K562 (cell line): ENCODE measurements at regions of chr11 and their contacts with region 1.

Region 1: DNA sequence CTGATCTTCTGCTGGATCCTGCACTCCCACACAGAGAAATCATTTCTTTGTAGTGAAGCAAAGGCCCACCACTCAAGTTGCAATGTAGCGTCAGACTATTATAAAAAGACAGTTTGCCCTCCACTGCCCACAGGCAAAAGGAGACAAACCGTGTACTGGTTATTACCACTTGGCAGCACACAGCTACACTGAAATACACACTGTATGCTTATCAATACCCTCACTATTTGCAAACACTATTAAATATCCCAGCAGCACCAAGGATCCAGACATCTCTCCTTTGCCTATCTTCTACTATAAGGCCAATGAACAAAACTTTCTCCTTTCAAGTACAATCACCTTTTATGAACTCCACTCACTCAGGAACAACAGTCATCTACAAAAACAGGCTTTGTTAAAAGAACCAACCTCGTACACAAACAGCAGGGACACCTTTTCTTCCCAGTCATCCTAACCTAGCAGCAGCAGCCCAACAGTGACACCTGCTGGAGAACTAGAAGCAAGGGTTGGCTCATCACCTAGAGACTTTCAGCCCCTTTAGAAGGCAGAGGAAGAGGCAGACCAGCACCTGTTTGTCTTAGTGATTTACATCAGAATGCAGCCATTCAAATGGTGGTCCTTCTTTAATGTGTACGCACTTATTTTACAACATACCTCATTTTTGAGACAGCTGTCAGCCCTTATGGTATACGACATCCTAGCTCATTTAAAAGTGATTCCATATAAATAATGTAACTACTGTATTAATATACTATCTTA is 56.1 kb downstream of the AMBRA1 start:
- DNase-seq: peak; percentile 78 to 90 (median 82)
- ATAC-seq: peak; percentile 91
- H3K4me3 ChIP-seq: no peak overlapping the region
- H3K27ac ChIP-seq: peak overlapping the region; percentile 22; the same call in 1 of the 3 replicates
- H3K4me1 ChIP-seq: peaks cover 16 to 35% of the 10 kb centered on the region in 2 experiments
- H3K27me3 ChIP-seq: no peaks in the 10 kb centered on the region; a peak in 1 of 5 replicates
- CTCF ChIP-seq: peak; percentile 92 to 93 (median 93)
- EP300 ChIP-seq: no peak
- POLR2A ChIP-seq: no peak
- RAD21 ChIP-seq: peak; percentile 92

Region 2: GRCh38 chr11:46380340-46381047 is 157.2 kb before region 1 on chr11:
- CTCF ChIA-PET with region 1: interaction called, 10 read pairs
- POLR2A ChIA-PET with region 1: interaction called, 3 read pairs
- in situ Hi-C with region 1: no loop called
- intact Hi-C with region 1: no loop called
- DNase-seq: peak; percentile 86 to 90 (median 88)
- ATAC-seq: peak; percentile 62
- H3K4me3 ChIP-seq: peak overlapping the region; percentile 75
- H3K27ac ChIP-seq: peak overlapping the region; percentile 96
- H3K4me1 ChIP-seq: peaks cover 25 to 66% of the 10 kb centered on the region in 2 experiments
- H3K27me3 ChIP-seq: no peaks in the 10 kb centered on the region
- CTCF ChIP-seq: no peak
- EP300 ChIP-seq: no peak
- POLR2A ChIP-seq: peak; percentile 66
- RAD21 ChIP-seq: no peak

Region 3: DNA sequence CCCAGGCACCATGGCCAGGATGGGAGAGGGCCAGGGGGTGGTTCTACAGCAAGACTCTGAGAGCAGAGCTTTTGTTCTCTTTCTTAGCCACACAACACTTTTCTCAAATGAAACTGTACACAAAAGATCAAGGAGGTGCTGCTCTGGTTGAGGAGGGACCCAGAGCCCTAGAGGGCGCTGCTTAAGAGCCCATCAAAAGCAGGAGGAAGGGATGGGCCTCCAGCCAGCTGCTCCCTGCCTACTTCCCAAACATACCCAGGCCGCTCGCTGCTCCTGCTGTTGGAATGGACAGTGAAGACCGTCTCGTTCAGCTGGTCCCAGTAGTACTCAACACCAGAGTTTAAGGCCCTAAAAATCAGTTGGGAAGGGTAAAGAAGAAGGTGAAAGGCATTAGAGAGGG is 127.7 kb before region 1 on chr11:
- CTCF ChIA-PET with region 1: no interaction called
- POLR2A ChIA-PET with region 1: no interaction called
- in situ Hi-C with region 1: no loop called
- intact Hi-C with region 1: loop called (anchors 5 kb)
- DNase-seq: peak in 1 of 4 experiments; percentile 29
- ATAC-seq: peak; percentile 77
- H3K4me3 ChIP-seq: no peak overlapping the region
- H3K27ac ChIP-seq: no peak overlapping the region
- H3K4me1 ChIP-seq: peaks cover 0 to 4% of the 10 kb centered on the region in 2 experiments; a peak in 1 of 5 replicates
- H3K27me3 ChIP-seq: no peaks in the 10 kb centered on the region
- CTCF ChIP-seq: peak; percentile 21 to 46 (median 43); a peak in 4 of 6 replicates
- EP300 ChIP-seq: no peak
- POLR2A ChIP-seq: no peak
- RAD21 ChIP-seq: peak in 1 of 2 experiments; percentile 56; a peak in 2 of 4 replicates

Region 4: GRCh38 chr11:46593550-46594373 is 56.0 kb after region 1 on chr11 and contains the start of gene AMBRA1:
- CTCF ChIA-PET with region 1: no interaction called
- POLR2A ChIA-PET with region 1: no interaction called
- in situ Hi-C with region 1: no loop called
- intact Hi-C with region 1: loop called (anchors 5 kb)
- DNase-seq: peak; percentile 76 to 96 (median 82)
- ATAC-seq: peak; percentile 86
- H3K4me3 ChIP-seq: peak within 1 kb of the TSS; percentile 97
- H3K27ac ChIP-seq: peak within 1 kb of the TSS; percentile 78
- H3K4me1 ChIP-seq: peaks cover 25 to 38% of the 10 kb centered on the region in 2 experiments
- H3K27me3 ChIP-seq: no peaks in the 10 kb centered on the region
- CTCF ChIP-seq: peak in 1 of 3 experiments; percentile 7; a peak in 1 of 6 replicates
- EP300 ChIP-seq: peak; percentile 61
- POLR2A ChIP-seq: peak; percentile 84
- RAD21 ChIP-seq: no peak; a peak in 1 of 4 replicates
- polyA plus RNA-seq, gene AMBRA1: 0.15 to 0.39 TPM